PC-3 (cell line): ENCODE measurements at regions of chr2 and their contacts with region 1.

Region 1: DNA sequence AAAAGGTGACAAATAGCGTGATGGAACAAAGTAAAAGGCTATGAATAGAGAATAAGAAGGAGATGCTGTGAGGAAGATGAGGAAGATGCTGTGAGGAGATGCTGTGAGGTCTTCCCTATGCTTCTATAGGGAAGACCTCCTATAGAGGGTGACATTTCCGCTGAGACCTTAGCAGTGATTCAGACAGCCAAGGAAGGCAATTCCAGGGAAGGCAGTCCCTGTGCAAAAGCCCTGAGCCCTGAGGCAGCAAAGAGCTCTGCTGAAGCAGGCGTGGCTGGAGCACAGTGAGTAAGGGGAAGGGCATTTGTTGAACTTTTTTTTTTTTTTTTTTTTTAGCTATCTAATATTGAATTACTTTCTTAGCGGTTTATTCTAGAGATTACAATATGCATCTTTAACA is 142.7 kb upstream of the FOSL2 start:
- DNase-seq: peak; percentile 95
- ATAC-seq: peak; percentile 100
- H3K4me3 ChIP-seq: no peak overlapping the region
- H3K27ac ChIP-seq: no peak overlapping the region
- H3K4me1 ChIP-seq: peaks cover 16% of the 10 kb centered on the region
- H3K27me3 ChIP-seq: no peaks in the 10 kb centered on the region
- CTCF ChIP-seq: peak; percentile 37; the same call in 1 of the 2 replicates

Region 2: DNA sequence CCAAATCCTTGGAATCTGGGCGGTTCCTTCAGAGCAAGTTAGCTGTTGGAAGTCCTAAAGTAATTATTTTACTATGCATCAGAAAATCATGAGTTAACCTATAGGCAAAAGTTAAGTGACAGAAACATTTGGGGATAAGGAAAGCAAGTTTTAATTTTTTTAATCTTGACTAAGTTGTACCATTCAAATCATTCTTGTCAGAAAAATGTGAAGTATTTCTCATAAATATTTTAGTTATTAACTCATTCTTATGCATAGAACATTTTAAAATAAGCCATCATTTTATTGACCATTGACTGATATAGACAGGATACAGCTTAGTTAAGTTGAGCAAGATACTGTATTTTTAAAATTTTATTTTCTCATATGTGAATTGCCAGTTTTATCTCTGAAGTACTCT is 44.4 kb after region 1 on chr2:
- CTCF ChIA-PET with region 1: no interaction called
- POLR2A ChIA-PET with region 1: no interaction called
- intact Hi-C with region 1: loop called (anchors 1 kb)
- DNase-seq: peak; percentile 24
- ATAC-seq: no peak
- H3K4me3 ChIP-seq: no peak overlapping the region
- H3K27ac ChIP-seq: 0 out of 2 replicates have a peak overlapping the region, but pooled peaks have one; percentile 2
- H3K4me1 ChIP-seq: peaks cover 44% of the 10 kb centered on the region
- H3K27me3 ChIP-seq: no peaks in the 10 kb centered on the region
- CTCF ChIP-seq: no peak

Region 3: GRCh38 chr2:28325567-28326468 is 75.8 kb after region 1 on chr2:
- CTCF ChIA-PET with region 1: no interaction called
- POLR2A ChIA-PET with region 1: no interaction called
- intact Hi-C with region 1: no loop called
- DNase-seq: no peak
- ATAC-seq: no peak
- H3K4me3 ChIP-seq: no peak overlapping the region
- H3K27ac ChIP-seq: no peak overlapping the region
- H3K4me1 ChIP-seq: no peaks in the 10 kb centered on the region
- H3K27me3 ChIP-seq: no peaks in the 10 kb centered on the region
- CTCF ChIP-seq: no peak

Region 4: DNA sequence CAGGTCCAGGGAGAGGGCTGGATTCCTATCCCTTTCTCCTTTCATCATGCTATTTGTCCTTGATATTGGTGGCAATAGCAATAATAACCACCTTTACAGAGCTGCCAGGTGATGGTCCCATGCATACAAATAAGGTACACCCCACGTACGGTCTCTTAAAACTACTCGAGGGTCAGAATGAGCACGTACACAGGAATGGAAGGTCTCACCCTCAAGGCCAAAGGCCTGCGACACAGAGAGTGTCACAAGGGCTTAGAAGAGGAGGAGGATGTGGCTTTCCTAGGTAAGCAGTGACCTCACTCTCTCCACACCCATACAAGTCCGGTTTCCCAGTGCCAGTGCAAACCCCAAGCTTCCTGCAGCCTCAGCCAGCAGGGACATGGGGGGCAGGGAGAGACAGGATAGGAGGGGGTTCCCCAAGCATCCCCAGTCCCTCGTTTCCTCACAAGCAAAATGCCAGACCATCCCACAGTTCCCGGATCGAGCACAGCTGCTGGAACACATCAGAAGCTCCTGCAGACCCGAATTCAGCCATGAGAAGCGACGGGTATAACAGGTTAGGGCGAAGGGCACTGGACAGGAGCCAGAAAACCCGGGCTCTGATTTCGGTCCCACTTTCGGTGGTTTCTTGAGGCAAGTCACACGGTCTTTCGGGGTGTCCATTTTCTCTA is 295.0 kb after region 1 on chr2:
- CTCF ChIA-PET with region 1: no interaction called
- POLR2A ChIA-PET with region 1: no interaction called
- intact Hi-C with region 1: no loop called
- DNase-seq: peak; percentile 24
- ATAC-seq: peak; percentile 64
- H3K4me3 ChIP-seq: no peak overlapping the region
- H3K27ac ChIP-seq: no peak overlapping the region
- H3K4me1 ChIP-seq: peaks cover 11% of the 10 kb centered on the region
- H3K27me3 ChIP-seq: no peaks in the 10 kb centered on the region
- CTCF ChIP-seq: no peak